Caco-2 (cell line): ENCODE measurements at regions of chr20 and their contacts with region 1.

Region 1: GRCh38 chr20:17536944-17537444 is 5.8 kb upstream of the BFSP1 start:
- DNase-seq: peak; percentile 87 to 89
- H3K4me3 ChIP-seq: no peak overlapping the region
- H3K4me3 Mint-ChIP-seq: no peak overlapping the region
- H3K27ac Mint-ChIP-seq: peak overlapping the region; percentile 63
- H3K4me1 ChIP-seq: peaks cover 7% of the 10 kb centered on the region; the same call in 1 of the 2 replicates
- H3K4me1 Mint-ChIP-seq: peaks cover 15% of the 10 kb centered on the region
- H3K27me3 ChIP-seq: no peaks in the 10 kb centered on the region
- H3K27me3 Mint-ChIP-seq: no peaks in the 10 kb centered on the region
- CTCF ChIP-seq: peak; percentile 97 to 98

Region 2: DNA sequence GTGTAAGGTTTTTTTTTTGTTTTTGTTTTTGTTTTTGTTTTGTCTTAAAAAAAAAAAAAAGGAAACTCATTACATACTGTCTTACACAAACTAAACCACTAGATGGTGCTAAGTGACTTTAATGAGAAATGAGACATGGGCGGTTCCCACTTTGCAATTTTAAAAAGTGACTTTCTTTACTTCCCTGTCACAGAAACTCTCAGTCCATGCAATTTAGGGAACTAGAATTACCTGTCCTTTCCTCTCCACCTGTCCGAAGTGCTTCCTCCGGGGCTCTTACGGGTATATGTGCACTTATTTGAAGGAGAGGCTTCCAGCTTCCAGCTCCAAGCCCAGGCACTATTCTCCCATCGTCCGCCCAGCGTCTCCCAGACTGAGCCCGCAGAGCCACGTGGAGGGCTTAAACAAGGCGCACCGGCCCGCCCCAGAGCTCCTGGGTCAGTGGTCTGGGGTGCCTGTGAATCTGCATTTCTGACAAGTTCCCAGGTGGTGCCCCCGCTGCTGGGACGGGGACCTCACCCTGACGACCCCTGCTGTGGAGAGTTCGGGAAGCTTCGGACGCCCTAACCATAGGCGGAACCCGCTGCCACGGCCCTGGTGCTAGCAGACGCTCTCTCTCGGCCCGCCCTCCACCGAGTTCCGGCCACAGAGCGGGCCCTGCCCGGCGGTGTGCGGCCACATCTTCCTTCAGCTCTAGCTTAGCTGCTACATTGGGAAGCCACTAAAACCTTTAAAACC is 31.9 kb before region 1 on chr20:
- CTCF ChIA-PET with region 1: interaction called, 9 read pairs
- POLR2A ChIA-PET with region 1: no interaction called
- intact Hi-C with region 1: loop called (anchors 1 kb)
- DNase-seq: peak in 1 of 2 experiments; percentile 53
- H3K4me3 ChIP-seq: peak overlapping the region; percentile 37
- H3K4me3 Mint-ChIP-seq: peak overlapping the region; percentile 75
- H3K27ac Mint-ChIP-seq: peak overlapping the region; percentile 58
- H3K4me1 ChIP-seq: peaks cover 12% of the 10 kb centered on the region; the same call in 1 of the 2 replicates
- H3K4me1 Mint-ChIP-seq: peaks cover 18% of the 10 kb centered on the region
- H3K27me3 ChIP-seq: no peaks in the 10 kb centered on the region
- H3K27me3 Mint-ChIP-seq: no peaks in the 10 kb centered on the region
- CTCF ChIP-seq: peak; percentile 54 to 70

Region 3: GRCh38 chr20:17550983-17551350 is 14.0 kb after region 1 on chr20:
- CTCF ChIA-PET with region 1: no interaction called
- POLR2A ChIA-PET with region 1: no interaction called
- intact Hi-C with region 1: no loop called
- DNase-seq: no peak
- H3K4me3 ChIP-seq: no peak overlapping the region
- H3K4me3 Mint-ChIP-seq: no peak overlapping the region
- H3K27ac Mint-ChIP-seq: no peak overlapping the region
- H3K4me1 ChIP-seq: no peaks in the 10 kb centered on the region
- H3K4me1 Mint-ChIP-seq: peaks cover 3% of the 10 kb centered on the region
- H3K27me3 ChIP-seq: no peaks in the 10 kb centered on the region
- H3K27me3 Mint-ChIP-seq: no peaks in the 10 kb centered on the region
- CTCF ChIP-seq: no peak

Region 4: DNA sequence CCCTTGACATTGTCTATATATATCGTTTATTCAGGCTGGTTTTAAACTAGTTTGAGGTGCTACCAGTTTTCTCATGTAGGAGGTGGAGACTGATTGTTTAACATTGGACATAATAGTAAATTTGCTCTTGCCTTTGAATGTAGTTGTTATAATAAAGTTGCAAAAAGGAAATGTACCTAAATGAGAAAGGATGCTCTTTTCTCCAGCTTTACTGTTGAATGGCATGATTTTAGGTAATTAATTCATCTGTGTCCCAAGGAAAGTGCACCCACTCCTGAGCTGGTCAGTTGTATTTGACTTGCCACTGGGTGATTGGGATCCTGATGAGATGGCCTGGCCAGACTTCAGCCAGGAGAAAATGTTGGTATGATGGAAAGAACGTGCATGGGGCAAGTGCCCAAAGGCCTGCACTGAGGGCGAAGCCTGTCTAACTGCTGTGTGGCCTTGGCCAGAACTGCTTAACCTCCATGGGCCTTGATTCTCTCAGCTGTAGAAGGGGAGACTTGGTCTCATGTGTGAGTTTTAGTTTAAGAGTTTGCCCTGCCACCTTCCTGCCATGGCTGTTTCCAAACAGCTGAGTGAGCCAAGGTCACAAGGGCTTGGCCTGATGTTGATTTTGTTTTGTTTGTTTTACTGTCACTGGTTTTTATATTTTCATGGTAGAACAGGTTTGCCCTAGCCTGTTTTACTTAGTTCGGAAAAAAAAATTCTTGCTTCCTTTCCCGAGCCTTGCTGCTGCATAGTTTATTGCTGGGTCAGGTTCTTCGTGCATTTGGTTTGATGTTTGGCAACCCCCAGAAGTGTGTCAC is 68.1 kb after region 1 on chr20:
- CTCF ChIA-PET with region 1: interaction called, 8 read pairs
- POLR2A ChIA-PET with region 1: no interaction called
- intact Hi-C with region 1: loop called (anchors 1 kb)
- DNase-seq: peak; percentile 37 to 60
- H3K4me3 ChIP-seq: no peak overlapping the region
- H3K4me3 Mint-ChIP-seq: peak overlapping the region; percentile 19
- H3K27ac Mint-ChIP-seq: peak overlapping the region; percentile 40
- H3K4me1 ChIP-seq: peaks cover 36% of the 10 kb centered on the region
- H3K4me1 Mint-ChIP-seq: peaks cover 37% of the 10 kb centered on the region
- H3K27me3 ChIP-seq: no peaks in the 10 kb centered on the region
- H3K27me3 Mint-ChIP-seq: no peaks in the 10 kb centered on the region
- CTCF ChIP-seq: no peak

Region 5: DNA sequence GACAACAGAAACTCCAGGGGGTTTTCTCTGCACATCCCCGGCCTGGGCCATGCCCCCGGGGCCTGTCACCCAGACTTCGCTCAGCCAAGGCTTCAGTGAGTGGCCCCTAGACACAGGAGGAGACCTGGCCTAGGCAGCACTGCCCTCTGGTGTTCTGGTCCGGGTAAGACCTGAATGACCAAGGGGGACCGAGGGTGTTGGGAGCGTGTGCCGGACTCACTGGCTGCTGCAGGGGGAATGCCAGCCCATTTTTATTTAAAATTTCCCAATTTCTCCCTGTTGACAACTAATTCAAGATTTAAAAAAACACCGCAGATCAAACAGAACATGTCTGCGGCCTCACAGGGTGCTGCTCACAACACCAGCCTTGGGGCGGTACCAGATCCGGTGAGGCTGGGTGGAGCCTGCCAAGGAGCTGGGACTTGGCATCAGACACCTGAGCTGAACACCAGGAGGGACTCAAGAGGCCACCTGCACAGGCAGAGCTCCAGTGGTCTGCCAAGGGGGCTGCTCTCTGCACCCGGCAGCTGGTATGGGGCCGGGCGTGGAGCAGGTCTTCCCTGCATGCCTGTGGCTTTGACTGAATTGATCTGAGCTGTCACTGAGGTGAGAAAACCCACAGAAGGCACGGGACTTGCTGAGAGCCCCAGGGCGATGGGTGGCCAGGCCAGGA is 80.7 kb after region 1 on chr20:
- CTCF ChIA-PET with region 1: interaction called, 5 read pairs
- POLR2A ChIA-PET with region 1: no interaction called
- intact Hi-C with region 1: loop called (anchors 1 kb)
- DNase-seq: peak; percentile 69 to 73
- H3K4me3 ChIP-seq: no peak overlapping the region
- H3K4me3 Mint-ChIP-seq: no peak overlapping the region
- H3K27ac Mint-ChIP-seq: peak overlapping the region; percentile 60
- H3K4me1 ChIP-seq: 0 out of 2 replicates have a peak, but pooled peaks cover 6% of the 10 kb centered on the region
- H3K4me1 Mint-ChIP-seq: peaks cover 5% of the 10 kb centered on the region
- H3K27me3 ChIP-seq: no peaks in the 10 kb centered on the region
- H3K27me3 Mint-ChIP-seq: no peaks in the 10 kb centered on the region
- CTCF ChIP-seq: peak; percentile 45 to 68

Region 6: DNA sequence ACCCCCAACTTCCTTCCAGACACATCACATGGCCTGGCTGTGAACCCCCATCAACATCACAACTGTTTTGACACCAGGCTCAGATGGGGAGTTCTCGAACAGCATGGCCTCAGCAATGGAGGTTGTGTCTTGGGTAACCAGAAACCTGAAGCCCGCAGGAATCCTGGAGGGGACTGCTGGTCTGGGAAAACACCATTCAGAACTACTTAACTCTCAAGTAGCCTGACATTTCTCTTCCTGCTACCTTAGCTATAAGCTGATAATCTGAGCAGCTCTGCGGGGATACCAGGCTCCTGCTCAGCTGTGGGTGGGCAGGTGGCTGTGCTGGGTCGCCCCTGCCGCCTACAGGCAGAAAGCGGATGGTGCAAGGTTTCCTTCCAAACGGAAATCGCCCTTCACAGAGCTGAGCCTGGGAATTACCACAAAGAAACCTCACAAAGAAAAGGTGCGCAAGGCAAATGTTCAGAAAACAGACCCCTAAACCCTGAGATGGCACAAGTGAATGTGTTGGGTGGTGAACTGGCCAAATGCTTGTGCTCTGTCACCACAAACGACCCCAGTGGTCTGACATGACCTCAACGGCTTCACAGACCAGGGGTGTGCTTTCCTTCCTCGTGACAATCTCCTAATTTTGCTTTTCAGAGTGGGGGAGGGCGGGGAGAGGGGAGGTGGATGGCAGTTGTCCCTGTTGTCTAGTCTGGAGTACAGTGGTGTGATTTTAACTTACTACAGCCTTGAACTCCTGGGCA is 402.1 kb after region 1 on chr20:
- CTCF ChIA-PET with region 1: interaction called, 6 read pairs
- POLR2A ChIA-PET with region 1: no interaction called
- intact Hi-C with region 1: loop called (anchors 10 kb)
- DNase-seq: peak; percentile 75 to 83
- H3K4me3 ChIP-seq: no peak overlapping the region
- H3K4me3 Mint-ChIP-seq: no peak overlapping the region
- H3K27ac Mint-ChIP-seq: peak overlapping the region; percentile 66
- H3K4me1 ChIP-seq: no peaks in the 10 kb centered on the region
- H3K4me1 Mint-ChIP-seq: no peaks in the 10 kb centered on the region
- H3K27me3 ChIP-seq: no peaks in the 10 kb centered on the region
- H3K27me3 Mint-ChIP-seq: no peaks in the 10 kb centered on the region
- CTCF ChIP-seq: peak; percentile 94 to 96